OCI-LY7 (cell line): ENCODE measurements at regions of chr13 and their contacts with region 1.

Region 1: DNA sequence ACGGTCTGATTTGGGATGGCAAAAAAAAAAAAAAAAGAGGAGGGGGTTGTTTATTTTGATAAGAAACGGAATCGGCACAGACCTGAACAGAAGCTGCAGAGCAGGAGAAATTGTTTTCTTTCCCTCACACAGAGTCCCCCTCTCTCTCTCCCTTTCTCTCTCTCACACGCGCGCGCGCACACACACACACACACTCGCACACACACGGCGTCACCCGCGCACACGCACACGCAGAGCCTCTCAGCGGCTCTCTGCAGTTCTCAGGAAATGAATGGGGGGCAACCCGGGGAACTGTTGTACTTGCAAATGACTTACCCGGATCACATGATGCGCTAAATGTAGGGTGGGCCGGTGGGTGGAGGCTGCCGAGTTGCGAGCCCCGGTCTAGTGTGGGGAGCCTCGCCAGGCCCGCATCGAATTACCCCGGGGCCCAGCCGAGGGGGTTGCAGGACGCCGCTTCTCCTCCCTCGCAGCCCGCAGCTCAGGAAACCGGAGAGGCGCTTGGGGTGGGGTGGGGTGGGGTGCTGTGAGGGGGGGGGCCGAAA is 475 bp downstream of the KLF12 start:
- DNase-seq: peak; percentile 95
- H3K4me3 ChIP-seq: peak overlapping the region; percentile 86
- H3K27ac ChIP-seq: peak overlapping the region; percentile 90
- H3K4me1 ChIP-seq: peaks cover 38% of the 10 kb centered on the region
- CTCF ChIP-seq: 0 out of 2 replicates have a peak, but pooled peaks have one; percentile 14

Region 2: DNA sequence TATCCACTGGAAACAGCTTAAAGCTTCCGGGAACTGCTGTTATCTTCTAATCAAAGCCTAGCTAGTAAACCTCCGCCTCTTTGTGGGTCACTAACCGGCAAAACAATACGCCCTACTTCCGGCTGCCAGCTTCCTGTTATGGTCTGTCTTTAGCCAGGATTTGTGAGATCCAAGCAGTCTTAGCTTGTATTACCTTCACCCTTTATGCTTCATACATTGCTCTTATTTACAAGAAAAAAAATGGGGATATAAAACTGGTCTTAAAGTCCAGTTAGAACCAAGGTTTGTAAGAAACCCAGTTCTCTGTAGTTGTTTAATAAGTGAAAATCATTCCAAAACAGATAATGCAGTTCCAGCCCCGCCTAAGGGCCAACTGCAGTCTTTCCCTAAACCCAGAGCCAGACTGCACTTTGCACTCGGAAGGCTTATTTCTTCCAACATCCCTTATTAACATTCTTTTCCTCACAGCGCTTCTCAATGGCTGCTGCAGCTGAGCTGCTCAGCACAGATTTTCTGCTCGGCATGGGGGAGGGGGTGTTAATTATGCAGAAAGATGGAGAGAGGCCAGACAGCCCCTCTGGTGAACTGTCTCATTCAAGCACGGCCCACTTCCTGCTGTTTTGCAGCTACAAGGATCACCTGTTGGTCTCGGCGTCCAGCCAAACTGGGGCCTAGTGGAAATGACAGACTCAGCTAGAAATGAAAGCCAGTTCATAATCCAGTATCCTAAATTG is 367.9 kb before region 1 on chr13:
- CTCF ChIA-PET with region 1: no interaction called
- POLR2A ChIA-PET with region 1: no interaction called
- intact Hi-C with region 1: loop called (anchors 5 kb)
- DNase-seq: peak; percentile 88
- H3K4me3 ChIP-seq: peak overlapping the region; percentile 52
- H3K27ac ChIP-seq: peak overlapping the region; percentile 80
- H3K4me1 ChIP-seq: peaks cover 32% of the 10 kb centered on the region
- CTCF ChIP-seq: no peak

Region 3: GRCh38 chr13:73967397-73968165 is 166.1 kb before region 1 on chr13:
- CTCF ChIA-PET with region 1: no interaction called
- POLR2A ChIA-PET with region 1: interaction called, 21 read pairs
- intact Hi-C with region 1: loop called (anchors 1 kb)
- DNase-seq: peak; percentile 91
- H3K4me3 ChIP-seq: peak overlapping the region; percentile 61
- H3K27ac ChIP-seq: peak overlapping the region; percentile 99
- H3K4me1 ChIP-seq: peaks cover 76% of the 10 kb centered on the region
- CTCF ChIP-seq: no peak

Region 4: GRCh38 chr13:73991884-73992283 is 141.8 kb before region 1 on chr13:
- CTCF ChIA-PET with region 1: no interaction called
- POLR2A ChIA-PET with region 1: interaction called, 15 read pairs
- intact Hi-C with region 1: loop called (anchors 2 kb)
- DNase-seq: peak; percentile 84
- H3K4me3 ChIP-seq: peak overlapping the region; percentile 56
- H3K27ac ChIP-seq: peak overlapping the region; percentile 99
- H3K4me1 ChIP-seq: peaks cover 98% of the 10 kb centered on the region
- CTCF ChIP-seq: no peak

Region 5: DNA sequence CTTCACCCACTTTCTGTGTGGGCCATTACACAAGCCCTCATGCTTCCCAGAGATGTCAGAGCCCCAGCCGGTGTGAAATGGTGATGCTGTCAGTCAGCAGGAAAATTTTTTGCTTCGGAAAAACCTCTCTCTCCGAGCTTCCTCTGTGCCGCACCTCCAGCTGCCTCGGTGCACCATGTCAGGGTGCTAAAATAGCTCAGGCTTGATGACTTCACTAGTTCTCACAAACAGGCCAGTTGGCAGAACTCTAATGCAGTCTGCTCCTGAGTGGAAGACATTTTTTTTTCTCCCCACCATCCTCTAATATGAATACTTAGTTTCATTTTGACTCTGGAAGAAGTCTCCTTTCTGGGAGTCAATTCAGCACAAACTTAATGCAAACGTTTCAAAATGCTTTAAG is 70.8 kb before region 1 on chr13:
- CTCF ChIA-PET with region 1: no interaction called
- POLR2A ChIA-PET with region 1: interaction called, 11 read pairs
- intact Hi-C with region 1: loop called (anchors 2 kb)
- DNase-seq: peak; percentile 80
- H3K4me3 ChIP-seq: peak overlapping the region; percentile 60
- H3K27ac ChIP-seq: peak overlapping the region; percentile 84
- H3K4me1 ChIP-seq: peaks cover 54% of the 10 kb centered on the region
- CTCF ChIP-seq: no peak

Region 6: DNA sequence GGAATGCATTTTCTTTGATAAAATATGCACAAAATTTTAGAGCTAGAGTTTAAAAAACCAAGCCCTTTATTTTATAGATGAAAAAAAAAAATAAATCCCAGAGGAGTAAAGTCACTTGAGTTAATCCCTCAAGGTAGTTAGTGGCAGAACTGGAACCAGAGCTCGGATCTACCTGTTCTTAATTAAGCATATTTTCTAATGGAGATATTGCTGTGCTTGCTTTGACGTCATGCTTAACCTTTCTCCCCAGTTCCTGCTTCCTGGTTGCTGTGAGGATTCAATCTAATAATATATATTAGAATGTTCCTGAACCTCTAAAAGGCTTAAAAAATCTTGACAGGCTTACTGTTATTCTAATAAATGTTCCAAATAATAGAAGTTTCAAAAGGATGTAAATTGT is 301.1 kb after region 1 on chr13:
- CTCF ChIA-PET with region 1: no interaction called
- POLR2A ChIA-PET with region 1: no interaction called
- intact Hi-C with region 1: no loop called
- DNase-seq: no peak
- H3K4me3 ChIP-seq: no peak overlapping the region
- H3K27ac ChIP-seq: no peak overlapping the region
- H3K4me1 ChIP-seq: no peaks in the 10 kb centered on the region
- CTCF ChIP-seq: no peak